B cell (primary cell): ENCODE measurements at regions of chr9 and their contacts with region 1.

Region 1: GRCh38 chr9:137240861-137241489 is at the start of gene TUBB4B:
- DNase-seq: peak; percentile 100
- ATAC-seq: peak; percentile 74
- H3K4me3 ChIP-seq: peak within 1 kb of the TSS; percentile 50 to 84 (median 75)
- H3K4me3 Mint-ChIP-seq: peak within 1 kb of the TSS; percentile 92
- H3K27ac ChIP-seq: peak within 1 kb of the TSS; percentile 83 to 90
- H3K27ac Mint-ChIP-seq: peak within 1 kb of the TSS; percentile 97
- H3K4me1 ChIP-seq: peaks cover 29 to 53% of the 10 kb centered on the region in 2 donors
- H3K4me1 Mint-ChIP-seq: peaks cover 42% of the 10 kb centered on the region
- H3K27me3 ChIP-seq: no peaks in the 10 kb centered on the region
- H3K27me3 Mint-ChIP-seq: no peaks in the 10 kb centered on the region
- CTCF ChIP-seq: no peak
- total RNA-seq, gene TUBB4B: 110 and 111 TPM in 2 replicates

Region 2: GRCh38 chr9:137086531-137087408 is 154.2 kb before region 1 on chr9 and contains the start of gene MAN1B1:
- CTCF ChIA-PET with region 1: interaction called, 8 read pairs
- POLR2A ChIA-PET with region 1: interaction called, 7 read pairs
- intact Hi-C with region 1: loop called (anchors 1 kb)
- DNase-seq: peak; percentile 100
- ATAC-seq: peak; percentile 79
- H3K4me3 ChIP-seq: peak within 1 kb of the TSS; percentile 42 to 83 (median 74)
- H3K4me3 Mint-ChIP-seq: peak within 1 kb of the TSS; percentile 97
- H3K27ac ChIP-seq: peak within 1 kb of the TSS; percentile 88 to 97
- H3K27ac Mint-ChIP-seq: peak within 1 kb of the TSS; percentile 98
- H3K4me1 ChIP-seq: peaks cover 18 to 41% of the 10 kb centered on the region in 2 donors
- H3K4me1 Mint-ChIP-seq: peaks cover 40% of the 10 kb centered on the region
- H3K27me3 ChIP-seq: no peaks in the 10 kb centered on the region
- H3K27me3 Mint-ChIP-seq: no peaks in the 10 kb centered on the region
- CTCF ChIP-seq: no peak
- total RNA-seq, gene MAN1B1: 68.4 and 80.9 TPM in 2 replicates

Region 3: DNA sequence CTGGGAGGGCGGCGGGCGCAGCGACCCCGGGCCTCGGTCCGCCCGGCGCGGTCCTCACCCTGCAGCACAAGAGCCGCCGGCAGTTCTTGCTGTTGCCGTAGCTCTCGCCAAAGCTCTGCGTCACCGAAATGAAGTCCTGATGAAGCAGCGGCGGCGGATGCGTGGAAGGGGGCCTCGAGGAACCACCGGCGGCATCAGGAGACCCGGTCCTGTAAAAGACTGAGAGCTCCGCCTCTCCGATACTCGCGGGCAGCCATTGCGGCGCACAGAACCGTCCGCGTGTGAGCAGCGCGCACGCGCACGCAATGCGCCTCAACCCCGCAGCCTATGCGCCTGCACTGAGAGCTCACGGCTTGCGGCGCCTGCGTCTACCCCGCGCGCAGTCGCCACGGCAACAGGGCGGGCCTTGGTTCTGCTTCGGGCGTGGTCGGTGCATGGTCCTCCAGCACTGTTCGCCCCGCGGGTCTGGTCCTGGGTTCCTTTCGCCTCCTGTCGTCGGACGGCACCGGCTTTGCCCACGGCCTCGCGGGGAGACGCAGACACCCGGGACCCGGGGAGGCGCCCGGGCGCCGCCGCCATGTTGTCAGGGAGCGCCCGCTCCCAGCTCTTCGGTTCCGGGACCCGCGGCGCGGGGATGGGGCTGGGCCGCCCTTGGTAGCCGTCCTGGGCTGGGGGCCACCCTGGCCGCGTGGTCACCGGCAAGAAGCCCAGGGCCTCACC is 111.4 kb before region 1 on chr9:
- CTCF ChIA-PET with region 1: interaction called, 11 read pairs
- POLR2A ChIA-PET with region 1: interaction called, 8 read pairs
- intact Hi-C with region 1: no loop called
- DNase-seq: peak; percentile 94
- ATAC-seq: peak; percentile 93
- H3K4me3 ChIP-seq: peak overlapping the region; percentile 8 to 82 (median 73)
- H3K4me3 Mint-ChIP-seq: peak overlapping the region; percentile 89
- H3K27ac ChIP-seq: peak overlapping the region; percentile 71 to 93
- H3K27ac Mint-ChIP-seq: peak overlapping the region; percentile 91
- H3K4me1 ChIP-seq: peaks cover 28 to 32% of the 10 kb centered on the region in 2 donors
- H3K4me1 Mint-ChIP-seq: peaks cover 31% of the 10 kb centered on the region
- H3K27me3 ChIP-seq: peaks cover 0 to 3% (median 0%) of the 10 kb centered on the region in 4 experiments
- H3K27me3 Mint-ChIP-seq: peaks cover 4% of the 10 kb centered on the region
- CTCF ChIP-seq: no peak

Region 4: GRCh38 chr9:137200311-137201204 is 40.4 kb before region 1 on chr9 and contains the start of gene TPRN:
- CTCF ChIA-PET with region 1: interaction called, 12 read pairs
- POLR2A ChIA-PET with region 1: interaction called, 6 read pairs
- intact Hi-C with region 1: loop called (anchors 1 kb)
- DNase-seq: peak; percentile 99
- ATAC-seq: peak; percentile 95
- H3K4me3 ChIP-seq: peak within 1 kb of the TSS; percentile 12 to 80 (median 75)
- H3K4me3 Mint-ChIP-seq: peak within 1 kb of the TSS; percentile 88
- H3K27ac ChIP-seq: peak within 1 kb of the TSS; percentile 78 to 89
- H3K27ac Mint-ChIP-seq: peak within 1 kb of the TSS; percentile 90
- H3K4me1 ChIP-seq: peaks cover 31 to 41% of the 10 kb centered on the region in 2 donors
- H3K4me1 Mint-ChIP-seq: peaks cover 29% of the 10 kb centered on the region
- H3K27me3 ChIP-seq: peaks cover 0 to 6% (median 0%) of the 10 kb centered on the region in 4 experiments
- H3K27me3 Mint-ChIP-seq: no peaks in the 10 kb centered on the region
- CTCF ChIP-seq: no peak
- total RNA-seq, gene TPRN: 16.3 and 19.3 TPM in 2 replicates

Region 5: GRCh38 chr9:137262909-137263285 is 21.9 kb after region 1 on chr9:
- CTCF ChIA-PET with region 1: interaction called, 13 read pairs
- POLR2A ChIA-PET with region 1: interaction called, 3 read pairs
- intact Hi-C with region 1: no loop called
- DNase-seq: no peak
- ATAC-seq: no peak
- H3K4me3 ChIP-seq: no peak overlapping the region
- H3K4me3 Mint-ChIP-seq: no peak overlapping the region
- H3K27ac ChIP-seq: no peak overlapping the region
- H3K27ac Mint-ChIP-seq: no peak overlapping the region
- H3K4me1 ChIP-seq: peaks cover 3 to 14% of the 10 kb centered on the region in 2 donors
- H3K4me1 Mint-ChIP-seq: peaks cover 4% of the 10 kb centered on the region
- H3K27me3 ChIP-seq: no peaks in the 10 kb centered on the region
- H3K27me3 Mint-ChIP-seq: no peaks in the 10 kb centered on the region
- CTCF ChIP-seq: no peak

Region 6: DNA sequence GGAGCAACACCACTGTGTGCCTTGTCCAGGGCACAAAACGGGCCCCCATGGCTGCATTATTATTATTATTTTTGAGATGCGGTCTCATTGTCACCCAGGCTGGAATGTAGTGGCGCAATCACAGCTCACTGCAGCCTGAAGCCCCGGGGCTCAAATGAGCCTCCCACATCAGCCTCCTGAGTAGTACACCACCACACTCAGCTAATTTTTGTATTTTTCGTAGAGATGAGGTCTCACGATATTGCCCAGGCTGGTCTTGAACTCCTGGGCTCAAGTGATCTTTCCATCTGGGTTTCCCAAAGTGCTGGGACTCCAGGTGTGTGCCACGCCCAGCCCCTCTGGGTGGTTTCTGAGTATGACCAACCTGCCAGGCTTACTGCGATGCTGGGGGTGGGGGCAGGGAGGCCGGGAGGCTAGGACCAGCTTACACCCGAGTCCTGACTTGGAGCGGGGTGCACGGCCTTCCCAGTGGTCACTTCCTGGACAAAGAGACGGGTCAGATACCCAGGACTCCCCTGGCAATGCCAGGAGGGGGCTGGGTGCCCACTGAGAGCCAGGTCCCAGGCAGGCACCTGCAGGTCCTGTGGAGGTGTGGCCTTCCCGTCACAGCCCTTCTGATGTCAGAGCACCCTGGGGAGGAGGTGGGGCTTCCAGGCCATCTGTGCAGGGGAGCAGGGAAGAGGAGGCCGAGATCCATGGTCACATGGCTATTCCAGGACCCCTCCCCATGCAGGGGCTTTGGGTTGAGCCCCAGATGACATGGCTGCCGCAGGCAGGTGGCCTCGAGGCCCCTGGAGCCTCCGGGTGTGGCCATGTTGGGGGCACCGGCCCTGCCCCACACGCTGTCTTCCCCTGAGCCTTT is 69.4 kb after region 1 on chr9:
- CTCF ChIA-PET with region 1: no interaction called
- POLR2A ChIA-PET with region 1: no interaction called
- intact Hi-C with region 1: no loop called
- DNase-seq: no peak
- ATAC-seq: no peak
- H3K4me3 ChIP-seq: no peak overlapping the region
- H3K4me3 Mint-ChIP-seq: no peak overlapping the region
- H3K27ac ChIP-seq: no peak overlapping the region
- H3K27ac Mint-ChIP-seq: no peak overlapping the region
- H3K4me1 ChIP-seq: peaks cover 19 to 23% of the 10 kb centered on the region in 2 donors
- H3K4me1 Mint-ChIP-seq: peaks cover 9% of the 10 kb centered on the region
- H3K27me3 ChIP-seq: peaks cover 0 to 21% (median 5%) of the 10 kb centered on the region in 4 experiments
- H3K27me3 Mint-ChIP-seq: no peaks in the 10 kb centered on the region
- CTCF ChIP-seq: no peak

Region 7: GRCh38 chr9:137326445-137327065 is 85.6 kb after region 1 on chr9:
- CTCF ChIA-PET with region 1: no interaction called
- POLR2A ChIA-PET with region 1: no interaction called
- intact Hi-C with region 1: loop called (anchors 1 kb)
- DNase-seq: peak; percentile 94
- ATAC-seq: peak; percentile 90
- H3K4me3 ChIP-seq: peak overlapping the region; percentile 28 to 54 (median 42)
- H3K4me3 Mint-ChIP-seq: peak overlapping the region; percentile 85
- H3K27ac ChIP-seq: peak overlapping the region; percentile 62 to 77
- H3K27ac Mint-ChIP-seq: peak overlapping the region; percentile 87
- H3K4me1 ChIP-seq: peaks cover 13 to 23% of the 10 kb centered on the region in 2 donors
- H3K4me1 Mint-ChIP-seq: peaks cover 27% of the 10 kb centered on the region
- H3K27me3 ChIP-seq: peaks cover 0 to 6% (median 3%) of the 10 kb centered on the region in 4 experiments
- H3K27me3 Mint-ChIP-seq: peaks cover 11% of the 10 kb centered on the region
- CTCF ChIP-seq: no peak